SK-N-SH (cell line): ENCODE measurements at regions of chr22 and their contacts with region 1.

Region 1: GRCh38 chr22:23402275-23403151 is 177.6 kb downstream of the IGLL1 start:
- DNase-seq: peak; percentile 96
- H3K4me3 ChIP-seq: peak overlapping the region in 1 of 2 experiments; percentile 45; a peak in 2 of 4 replicates
- H3K27ac ChIP-seq: peak overlapping the region in 1 of 2 experiments; percentile 82; a peak in 2 of 4 replicates
- H3K4me1 ChIP-seq: peaks cover 0 to 42% of the 10 kb centered on the region in 2 experiments; a peak in 1 of 4 replicates
- H3K27me3 ChIP-seq: no peaks in the 10 kb centered on the region
- CTCF ChIP-seq: peak; percentile 54
- EP300 ChIP-seq: no peak
- RAD21 ChIP-seq: peak; percentile 79

Region 2: DNA sequence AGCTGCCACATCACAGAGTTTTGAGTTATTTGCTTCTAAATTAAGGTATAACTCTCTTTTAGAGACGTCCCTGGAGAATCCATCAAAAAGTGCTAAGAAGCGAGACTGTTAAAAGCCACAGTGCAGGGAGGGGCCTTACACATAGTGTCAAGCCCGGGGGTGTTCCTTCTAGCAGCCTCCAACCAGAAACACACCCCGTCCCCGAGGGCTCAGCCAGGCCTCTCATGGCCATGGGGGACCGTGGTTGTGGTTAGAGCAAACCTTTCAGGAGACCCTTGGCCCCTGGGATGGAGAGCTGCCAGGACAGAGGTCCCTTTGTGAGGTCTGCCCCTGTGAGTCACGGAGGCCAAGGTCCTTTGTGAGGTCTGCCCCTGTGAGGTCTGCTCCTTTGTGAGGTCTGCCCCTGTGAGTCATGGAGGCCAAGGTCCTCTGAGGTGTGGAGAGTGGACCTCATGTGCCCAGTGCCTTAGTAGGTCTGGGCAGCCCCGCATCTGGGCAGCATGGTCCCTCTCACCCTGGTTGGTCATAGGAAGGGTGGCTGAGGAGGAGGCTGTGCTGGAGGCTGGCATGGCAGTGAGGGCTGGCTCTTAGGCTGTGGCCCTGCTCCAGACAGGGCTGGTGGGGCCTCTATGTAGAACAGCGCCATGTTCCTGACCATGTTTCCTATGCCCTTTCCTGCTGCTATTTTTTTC is 326.8 kb before region 1 on chr22:
- CTCF ChIA-PET with region 1: no interaction called
- POLR2A ChIA-PET with region 1: no interaction called
- DNase-seq: no peak
- H3K4me3 ChIP-seq: no peak overlapping the region
- H3K27ac ChIP-seq: no peak overlapping the region
- H3K4me1 ChIP-seq: peaks cover 0 to 57% of the 10 kb centered on the region in 2 experiments; a peak in 1 of 4 replicates
- H3K27me3 ChIP-seq: no peaks in the 10 kb centered on the region
- CTCF ChIP-seq: no peak
- EP300 ChIP-seq: no peak
- RAD21 ChIP-seq: no peak

Region 3: GRCh38 chr22:23539135-23539838 is 136.8 kb after region 1 on chr22:
- CTCF ChIA-PET with region 1: interaction called, 13 read pairs
- POLR2A ChIA-PET with region 1: no interaction called
- DNase-seq: peak; percentile 71
- H3K4me3 ChIP-seq: peak overlapping the region in 1 of 2 experiments; percentile 41; a peak in 1 of 4 replicates
- H3K27ac ChIP-seq: peak overlapping the region in 1 of 2 experiments; percentile 47; a peak in 1 of 4 replicates
- H3K4me1 ChIP-seq: peaks cover 5 to 14% of the 10 kb centered on the region in 2 experiments; a peak in 3 of 4 replicates
- H3K27me3 ChIP-seq: no peaks in the 10 kb centered on the region
- CTCF ChIP-seq: peak; percentile 95
- EP300 ChIP-seq: no peak
- RAD21 ChIP-seq: peak; percentile 87